ENCODE measurements at regions of chr10 and their contacts with region 1.

Region 1: GRCh38 chr10:116069856-116070255 is 203.2 kb downstream of the GFRA1 start:
- DNase-seq: no peak
- H3K4me3 ChIP-seq: no peak overlapping the region
- H3K27ac ChIP-seq: no peak overlapping the region
- H3K4me1 ChIP-seq: peaks cover 2 to 9% (median 6%) of the 10 kb centered on the region in 4 experiments; a peak in 6 of 7 replicates
- H3K27me3 ChIP-seq: no peaks in the 10 kb centered on the region
- CTCF ChIP-seq: no peak
- EP300 ChIP-seq: no peak
- POLR2A ChIP-seq: no peak
- RAD21 ChIP-seq: no peak

Region 2: DNA sequence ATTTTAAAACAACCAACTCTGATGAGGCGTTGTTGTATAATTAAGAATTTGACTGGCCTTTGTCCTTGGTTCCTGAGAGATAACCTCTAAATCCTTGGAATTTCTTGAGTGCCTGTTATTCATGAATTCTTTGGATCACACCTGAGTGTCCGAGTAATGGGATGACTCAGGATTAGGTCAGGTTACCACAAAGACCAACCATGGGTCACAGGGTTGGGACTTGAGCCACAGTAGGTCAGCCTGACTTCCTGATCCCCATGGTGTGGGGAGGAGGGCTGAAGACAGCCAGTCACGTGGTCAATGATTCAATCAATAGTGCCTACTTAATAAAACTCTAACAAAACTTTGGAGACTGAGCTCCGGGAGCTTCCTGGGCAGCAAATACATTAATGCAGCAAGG is 10.7 kb after region 1 on chr10:
- CTCF ChIA-PET with region 1: interaction called, 27 read pairs
- POLR2A ChIA-PET with region 1: no interaction called
- DNase-seq: peak in 1 of 2 experiments; percentile 41
- H3K4me3 ChIP-seq: no peak overlapping the region
- H3K27ac ChIP-seq: no peak overlapping the region
- H3K4me1 ChIP-seq: peaks cover 0 to 5% (median 0%) of the 10 kb centered on the region in 4 experiments; a peak in 1 of 7 replicates
- H3K27me3 ChIP-seq: no peaks in the 10 kb centered on the region
- CTCF ChIP-seq: peak in 1 of 3 experiments; percentile 13; a peak in 1 of 4 replicates
- EP300 ChIP-seq: no peak
- POLR2A ChIP-seq: no peak
- RAD21 ChIP-seq: no peak; a peak in 1 of 4 replicates

Measured in H1 (cell line).